ENCODE measurements at regions of chr12 and their contacts with region 1.

Region 1: DNA sequence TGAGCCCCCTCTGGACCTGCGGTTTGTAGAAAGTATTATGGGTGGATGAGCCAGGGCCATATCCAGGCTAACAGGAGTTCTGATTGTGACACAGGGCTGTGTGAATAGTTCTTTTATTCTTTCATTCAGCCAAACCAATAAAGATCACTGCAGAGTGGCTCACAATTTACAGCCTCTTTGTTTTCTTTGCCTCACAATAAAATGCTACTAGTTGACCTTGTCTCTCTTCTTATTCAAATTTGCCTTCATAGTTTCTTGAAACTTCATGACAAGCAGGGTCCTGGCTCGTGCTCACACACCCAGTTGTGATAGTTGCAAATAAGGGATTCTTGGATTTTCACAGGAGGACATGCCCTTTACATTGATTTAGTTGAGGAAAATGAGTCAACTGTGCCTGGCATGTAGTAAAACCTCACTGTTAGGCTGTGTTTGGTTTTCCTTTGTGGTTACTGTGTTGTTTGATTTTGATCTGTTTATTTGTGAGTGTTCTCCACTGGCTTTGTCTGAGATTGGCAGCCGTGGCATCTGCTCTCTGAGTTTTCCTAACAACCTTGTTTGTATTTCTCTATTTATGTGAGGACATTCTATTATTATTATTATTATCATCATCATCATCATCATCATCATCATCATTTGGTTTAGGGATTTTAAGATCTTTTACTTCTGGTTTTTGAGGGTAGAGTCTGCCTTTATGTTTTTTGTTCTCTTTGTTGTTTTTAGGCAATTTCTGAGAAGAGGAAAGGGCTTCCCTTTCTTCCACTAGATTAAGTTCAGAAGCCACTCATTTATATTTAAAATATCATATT is 2.7 kb upstream of the KRT6B start:
- DNase-seq: peak; percentile 86
- ATAC-seq: peak; percentile 94
- H3K4me3 ChIP-seq: no peak overlapping the region
- H3K27ac ChIP-seq: peak overlapping the region; percentile 92
- H3K4me1 ChIP-seq: peaks cover 34% of the 10 kb centered on the region
- H3K27me3 ChIP-seq: no peaks in the 10 kb centered on the region
- CTCF ChIP-seq: no peak

Region 2: DNA sequence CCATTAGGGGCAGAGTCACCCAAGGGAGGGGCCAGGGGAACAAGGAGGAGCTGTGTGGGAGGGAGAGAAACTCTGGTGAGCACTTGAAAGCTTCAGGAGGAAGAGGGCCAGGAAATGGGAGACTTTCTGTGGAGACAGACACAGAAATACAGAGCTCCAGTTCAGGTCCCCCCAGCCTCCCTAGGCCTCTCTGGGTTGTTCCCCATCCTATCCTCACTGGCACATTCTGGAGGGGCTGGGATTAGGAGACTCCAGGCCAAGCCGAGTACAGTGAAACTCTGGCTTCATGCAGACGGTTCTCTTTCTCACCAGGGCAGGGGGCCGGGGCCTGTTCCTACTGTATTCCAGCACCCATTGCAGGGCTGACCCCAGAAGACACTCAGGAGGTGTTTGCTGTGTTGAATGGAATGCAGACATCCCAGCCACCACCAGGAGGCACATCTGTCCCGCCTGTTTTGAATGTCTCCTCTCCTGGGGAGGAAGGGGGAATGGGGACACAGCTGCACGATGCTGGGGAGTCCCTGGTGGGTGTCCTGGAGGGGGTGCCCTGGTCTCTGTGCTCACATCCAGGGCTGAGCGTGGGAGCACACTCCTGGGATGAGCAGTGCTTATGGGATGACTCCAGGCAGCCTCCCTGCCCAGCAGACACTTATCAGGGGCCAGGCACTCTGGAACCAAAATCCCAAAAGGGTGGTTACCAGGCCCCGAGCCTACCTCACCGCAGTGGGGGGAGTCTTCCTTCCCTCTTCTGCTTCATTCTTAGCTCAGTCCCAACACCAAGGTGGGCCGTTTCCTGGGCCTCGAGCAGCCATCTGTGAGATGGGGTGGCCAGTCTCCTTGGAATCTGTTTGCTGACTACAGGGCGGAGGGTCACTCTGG is 63.6 kb before region 1 on chr12:
- CTCF ChIA-PET with region 1: no interaction called
- POLR2A ChIA-PET with region 1: no interaction called
- intact Hi-C with region 1: loop called (anchors 10 kb)
- DNase-seq: peak; percentile 62
- ATAC-seq: peak; percentile 70
- H3K4me3 ChIP-seq: no peak overlapping the region
- H3K27ac ChIP-seq: no peak overlapping the region
- H3K4me1 ChIP-seq: 0 out of 2 replicates have a peak, but pooled peaks cover 1% of the 10 kb centered on the region
- H3K27me3 ChIP-seq: no peaks in the 10 kb centered on the region
- CTCF ChIP-seq: peak; percentile 92

Region 3: GRCh38 chr12:52427083-52427482 is 27.5 kb before region 1 on chr12:
- CTCF ChIA-PET with region 1: no interaction called
- POLR2A ChIA-PET with region 1: no interaction called
- intact Hi-C with region 1: loop called (anchors 1 kb)
- DNase-seq: peak; percentile 47
- ATAC-seq: peak; percentile 61
- H3K4me3 ChIP-seq: no peak overlapping the region
- H3K27ac ChIP-seq: peak overlapping the region; percentile 52
- H3K4me1 ChIP-seq: peaks cover 19% of the 10 kb centered on the region; the same call in 1 of the 2 replicates
- H3K27me3 ChIP-seq: no peaks in the 10 kb centered on the region
- CTCF ChIP-seq: no peak

Region 4: GRCh38 chr12:52436000-52436827 is 18.4 kb before region 1 on chr12:
- CTCF ChIA-PET with region 1: no interaction called
- POLR2A ChIA-PET with region 1: no interaction called
- intact Hi-C with region 1: loop called (anchors 1 kb)
- DNase-seq: peak; percentile 94
- ATAC-seq: peak; percentile 42
- H3K4me3 ChIP-seq: no peak overlapping the region
- H3K27ac ChIP-seq: peak overlapping the region; percentile 93
- H3K4me1 ChIP-seq: peaks cover 75% of the 10 kb centered on the region
- H3K27me3 ChIP-seq: no peaks in the 10 kb centered on the region
- CTCF ChIP-seq: no peak

Region 5: DNA sequence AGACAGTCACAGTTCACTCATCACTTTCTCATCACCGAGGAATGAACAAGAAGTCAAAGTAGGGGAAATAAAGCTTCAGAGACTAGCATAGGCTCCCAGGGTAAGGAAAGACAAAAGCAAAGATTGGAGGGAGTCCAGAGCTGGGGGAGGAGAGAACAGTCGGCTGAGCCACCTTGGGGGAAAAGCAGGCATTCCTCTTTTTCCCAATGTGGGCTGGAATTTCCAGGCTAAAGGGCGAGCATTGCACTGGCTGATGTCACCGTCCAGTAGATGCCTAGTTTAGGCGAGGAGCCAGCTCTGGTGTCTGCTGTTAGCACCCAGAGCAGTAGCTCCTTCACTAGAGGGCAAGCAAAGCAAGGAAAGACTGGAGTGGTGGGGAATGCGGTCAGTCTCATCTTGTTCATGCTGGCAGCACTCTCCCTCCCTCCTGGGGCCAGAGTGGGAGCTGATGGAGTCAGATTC is 12.0 kb before region 1 on chr12:
- CTCF ChIA-PET with region 1: no interaction called
- POLR2A ChIA-PET with region 1: no interaction called
- intact Hi-C with region 1: loop called (anchors 2 kb)
- DNase-seq: peak; percentile 99
- ATAC-seq: peak; percentile 64
- H3K4me3 ChIP-seq: peak overlapping the region; percentile 11; the same call in 1 of the 2 replicates
- H3K27ac ChIP-seq: peak overlapping the region; percentile 95
- H3K4me1 ChIP-seq: peaks cover 72% of the 10 kb centered on the region
- H3K27me3 ChIP-seq: no peaks in the 10 kb centered on the region
- CTCF ChIP-seq: peak; percentile 56

Region 6: DNA sequence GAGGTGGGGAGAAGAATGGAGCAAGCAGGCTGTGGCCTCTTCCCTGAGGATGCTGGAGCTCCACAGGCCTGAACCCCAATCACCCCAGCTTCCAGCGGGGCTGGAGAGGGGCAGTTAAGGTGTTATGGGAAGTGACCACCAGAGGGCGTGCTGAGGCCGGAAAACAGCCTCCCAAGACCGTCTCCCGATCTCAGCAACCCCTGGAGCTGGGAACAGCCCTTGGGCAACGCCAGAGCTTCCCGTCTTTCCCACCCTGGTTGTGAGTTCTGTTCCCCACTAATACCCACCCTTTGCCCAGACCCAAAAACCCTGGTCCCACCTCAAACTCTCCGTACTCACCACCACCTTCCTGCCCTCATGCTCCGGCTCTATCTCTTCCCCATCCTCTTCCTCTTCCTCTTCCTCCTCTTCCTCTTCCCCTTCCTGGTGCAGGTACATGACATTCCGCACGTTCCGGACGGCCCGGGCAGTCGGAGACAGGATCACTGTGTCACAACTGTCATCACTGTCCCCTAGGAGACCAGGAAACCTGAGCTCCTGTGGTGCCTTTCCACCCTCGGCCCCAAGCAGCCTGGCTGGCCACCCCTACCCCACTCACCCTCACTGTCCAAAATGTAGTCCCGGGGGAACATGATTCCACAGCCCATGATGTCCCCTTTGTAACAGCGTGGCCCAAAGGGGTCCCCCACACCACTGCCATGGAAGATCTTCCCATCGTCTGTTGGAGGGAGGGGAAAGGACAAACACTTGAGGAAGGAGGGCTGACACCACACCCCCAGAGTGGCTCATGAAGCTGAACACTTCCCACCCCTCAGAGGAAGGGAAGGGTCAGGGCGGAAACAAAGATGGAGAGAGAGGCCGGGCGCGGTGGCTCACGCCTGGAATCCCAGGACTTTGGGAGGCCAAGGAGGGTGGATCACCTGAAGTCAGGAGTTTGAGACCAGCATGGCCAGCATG is 611.6 kb after region 1 on chr12:
- CTCF ChIA-PET with region 1: no interaction called
- POLR2A ChIA-PET with region 1: no interaction called
- intact Hi-C with region 1: no loop called
- DNase-seq: peak; percentile 81
- ATAC-seq: peak; percentile 53
- H3K4me3 ChIP-seq: no peak overlapping the region
- H3K27ac ChIP-seq: no peak overlapping the region
- H3K4me1 ChIP-seq: peaks cover 26% of the 10 kb centered on the region
- H3K27me3 ChIP-seq: no peaks in the 10 kb centered on the region
- CTCF ChIP-seq: peak; percentile 89

Measured in PC-3 (cell line).